CD8-positive, alpha-beta T cell (primary cell): ENCODE measurements at regions of chr20 and their contacts with region 1.

Region 1: DNA sequence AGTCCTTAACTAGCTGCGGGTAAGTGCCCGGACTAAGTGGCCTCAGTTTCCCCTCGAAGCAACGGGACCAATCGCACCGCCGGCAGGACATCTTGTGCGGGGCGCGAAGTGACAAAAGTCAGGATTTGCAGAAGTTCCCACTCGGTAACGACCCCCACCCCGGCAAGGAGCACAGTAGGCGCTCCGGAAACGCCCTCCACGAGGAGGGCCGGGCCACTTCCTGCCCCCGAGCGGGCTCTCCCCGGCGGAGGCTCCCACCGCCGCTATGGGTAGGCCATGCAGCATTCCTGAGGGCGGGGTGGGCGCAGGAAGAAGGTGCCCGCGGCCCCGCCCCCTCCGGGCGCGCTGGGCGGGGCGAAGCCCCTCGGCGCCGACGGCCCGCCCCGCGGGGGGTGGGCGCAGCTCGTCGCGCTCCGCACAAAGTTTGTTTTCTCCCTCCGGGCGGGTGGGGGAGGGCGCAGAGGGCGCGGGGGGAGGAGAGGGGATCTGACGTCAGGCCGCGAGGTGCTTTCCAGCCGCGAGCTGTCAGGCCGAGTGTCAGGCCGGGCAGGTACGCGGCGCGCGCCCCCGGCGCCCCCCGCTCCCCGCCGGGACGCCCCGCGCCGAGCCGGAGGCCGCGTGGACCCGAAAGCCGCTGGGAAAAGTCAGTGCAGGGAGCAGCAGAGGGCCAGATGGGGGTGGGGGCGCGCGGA is at the start of gene TGIF2:
- DNase-seq: peak; percentile 84 to 96 (median 90)
- ATAC-seq: peak; percentile 79
- H3K4me3 ChIP-seq: peak within 1 kb of the TSS; percentile 96 to 99
- H3K4me3 Mint-ChIP-seq: peak within 1 kb of the TSS; percentile 95
- H3K27ac ChIP-seq: peak within 1 kb of the TSS; percentile 92 to 100
- H3K27ac Mint-ChIP-seq: peak within 1 kb of the TSS; percentile 99
- H3K4me1 ChIP-seq: peaks cover 41% of the 10 kb centered on the region
- H3K4me1 Mint-ChIP-seq: peaks cover 43% of the 10 kb centered on the region
- H3K27me3 ChIP-seq: no peaks in the 10 kb centered on the region
- H3K27me3 Mint-ChIP-seq: no peaks in the 10 kb centered on the region
- CTCF ChIP-seq: no peak
- total RNA-seq, gene TGIF2: 50.4 to 51.1 TPM

Region 2: GRCh38 chr20:36460648-36461599 is 112.3 kb before region 1 on chr20:
- CTCF ChIA-PET with region 1: no interaction called
- POLR2A ChIA-PET with region 1: interaction called, 7 read pairs
- intact Hi-C with region 1: loop called (anchors 1 kb)
- DNase-seq: peak; percentile 78 to 97 (median 89)
- ATAC-seq: peak; percentile 83
- H3K4me3 ChIP-seq: peak overlapping the region; percentile 47 to 52
- H3K4me3 Mint-ChIP-seq: peak overlapping the region; percentile 80
- H3K27ac ChIP-seq: peak overlapping the region; percentile 69 to 90
- H3K27ac Mint-ChIP-seq: peak overlapping the region; percentile 89
- H3K4me1 ChIP-seq: peaks cover 45% of the 10 kb centered on the region
- H3K4me1 Mint-ChIP-seq: peaks cover 44% of the 10 kb centered on the region
- H3K27me3 ChIP-seq: no peaks in the 10 kb centered on the region
- H3K27me3 Mint-ChIP-seq: no peaks in the 10 kb centered on the region
- CTCF ChIP-seq: no peak

Region 3: GRCh38 chr20:36562724-36563123 is 10.5 kb before region 1 on chr20:
- CTCF ChIA-PET with region 1: interaction called, 3 read pairs
- POLR2A ChIA-PET with region 1: interaction called, 15 read pairs
- intact Hi-C with region 1: no loop called
- DNase-seq: no peak
- ATAC-seq: no peak
- H3K4me3 ChIP-seq: no peak overlapping the region
- H3K4me3 Mint-ChIP-seq: no peak overlapping the region
- H3K27ac ChIP-seq: no peak overlapping the region
- H3K27ac Mint-ChIP-seq: no peak overlapping the region
- H3K4me1 ChIP-seq: no peaks in the 10 kb centered on the region
- H3K4me1 Mint-ChIP-seq: peaks cover 17% of the 10 kb centered on the region
- H3K27me3 ChIP-seq: no peaks in the 10 kb centered on the region
- H3K27me3 Mint-ChIP-seq: no peaks in the 10 kb centered on the region
- CTCF ChIP-seq: no peak

Region 4: DNA sequence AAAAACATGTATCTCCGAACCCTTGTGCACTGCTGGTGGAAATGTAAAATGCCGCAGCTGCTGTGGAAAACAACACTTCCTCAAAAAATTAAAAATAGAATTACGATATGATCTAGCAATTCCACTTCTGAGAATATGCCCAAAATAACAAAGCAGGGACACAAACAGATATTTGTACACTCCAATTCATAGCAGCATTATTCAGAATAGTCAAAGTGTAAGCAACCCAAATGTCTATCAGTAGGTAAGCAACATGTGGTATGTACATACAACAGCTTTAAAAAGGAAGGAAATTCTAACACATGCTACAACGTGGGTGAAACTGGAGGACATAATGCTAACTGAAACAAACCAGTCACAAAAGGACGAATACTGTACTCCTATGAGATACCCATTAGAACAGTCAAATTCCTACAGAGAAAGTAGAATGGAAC is 26.7 kb after region 1 on chr20:
- CTCF ChIA-PET with region 1: interaction called, 11 read pairs
- POLR2A ChIA-PET with region 1: interaction called, 77 read pairs
- intact Hi-C with region 1: loop called (anchors 1 kb)
- DNase-seq: no peak
- ATAC-seq: no peak
- H3K4me3 ChIP-seq: no peak overlapping the region
- H3K4me3 Mint-ChIP-seq: no peak overlapping the region
- H3K27ac ChIP-seq: no peak overlapping the region
- H3K27ac Mint-ChIP-seq: peak overlapping the region; percentile 45
- H3K4me1 ChIP-seq: peaks cover 20% of the 10 kb centered on the region
- H3K4me1 Mint-ChIP-seq: peaks cover 29% of the 10 kb centered on the region
- H3K27me3 ChIP-seq: no peaks in the 10 kb centered on the region
- H3K27me3 Mint-ChIP-seq: no peaks in the 10 kb centered on the region
- CTCF ChIP-seq: no peak

Region 5: GRCh38 chr20:36745927-36746659 is 172.8 kb after region 1 on chr20 and contains the start of gene NDRG3:
- CTCF ChIA-PET with region 1: no interaction called
- POLR2A ChIA-PET with region 1: interaction called, 5 read pairs
- intact Hi-C with region 1: loop called in 1 of 2 experiments (anchors 1 kb)
- DNase-seq: peak; percentile 85 to 97 (median 92)
- ATAC-seq: peak; percentile 97
- H3K4me3 ChIP-seq: peak within 1 kb of the TSS; percentile 85 to 87
- H3K4me3 Mint-ChIP-seq: peak within 1 kb of the TSS; percentile 88
- H3K27ac ChIP-seq: peak within 1 kb of the TSS; percentile 44 to 74
- H3K27ac Mint-ChIP-seq: peak within 1 kb of the TSS; percentile 90
- H3K4me1 ChIP-seq: peaks cover 7% of the 10 kb centered on the region
- H3K4me1 Mint-ChIP-seq: peaks cover 29% of the 10 kb centered on the region
- H3K27me3 ChIP-seq: no peaks in the 10 kb centered on the region
- H3K27me3 Mint-ChIP-seq: no peaks in the 10 kb centered on the region
- CTCF ChIP-seq: no peak
- total RNA-seq, gene NDRG3: 12.9 to 15.1 TPM